ENCODE measurements at regions of chr6 and their contacts with region 1.

Region 1: GRCh38 chr6:16761471-16762267 is 409 bp upstream of the ATXN1 start:
- DNase-seq: peak; percentile 88 to 93 (median 91)
- ATAC-seq: peak; percentile 29 to 68 (median 62)
- H3K4me3 ChIP-seq: peak overlapping the region; percentile 67 to 99 (median 89)
- H3K27ac ChIP-seq: peak overlapping the region; percentile 93 to 100 (median 98)
- H3K4me1 ChIP-seq: peaks cover 0 to 65% (median 32%) of the 10 kb centered on the region in 12 donors
- H3K27me3 ChIP-seq: no peaks in the 10 kb centered on the region
- CTCF ChIP-seq: peak in 8 of 12 donors; percentile 21 to 52 (median 30)
- POLR2A ChIP-seq: no peak

Region 2: GRCh38 chr6:16228709-16229665 is 532.7 kb before region 1 on chr6:
- intact Hi-C with region 1: no loop called
- DNase-seq: no peak
- ATAC-seq: peak in 3 of 4 donors; percentile 44 to 72 (median 72)
- H3K4me3 ChIP-seq: peak overlapping the region in 8 of 12 donors; percentile 4 to 34 (median 11)
- H3K27ac ChIP-seq: no peak overlapping the region
- H3K4me1 ChIP-seq: peaks cover 0 to 16% (median 11%) of the 10 kb centered on the region in 12 donors
- H3K27me3 ChIP-seq: peaks cover 0 to 12% (median 0%) of the 10 kb centered on the region in 9 donors
- CTCF ChIP-seq: peak in 8 of 12 donors; percentile 17 to 49 (median 28)
- POLR2A ChIP-seq: no peak

Region 3: DNA sequence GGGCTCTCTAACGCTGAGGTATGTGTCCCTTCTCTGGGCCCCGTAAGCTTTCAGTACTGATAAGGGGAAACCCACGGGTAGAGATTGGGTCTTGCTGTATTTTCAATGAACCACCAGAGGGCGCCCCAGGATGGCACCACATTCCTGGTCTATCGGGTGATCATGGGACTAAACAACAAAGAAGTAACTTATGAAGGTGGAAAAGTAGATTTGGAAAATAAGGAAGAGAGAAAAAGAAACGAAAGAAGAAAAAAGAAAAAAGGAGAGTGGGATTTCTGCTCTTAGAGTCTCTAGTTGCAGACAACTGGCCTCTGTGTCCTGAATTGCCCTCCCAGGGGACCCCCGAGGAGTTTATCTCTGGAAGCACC is 429.5 kb before region 1 on chr6:
- intact Hi-C with region 1: loop called in 9 of 10 experiments (anchors 1 to 10 kb)
- DNase-seq: peak; percentile 68 to 82 (median 81)
- ATAC-seq: peak; percentile 72 to 87 (median 78)
- H3K4me3 ChIP-seq: peak overlapping the region in 1 of 12 donors; percentile 3
- H3K27ac ChIP-seq: peak overlapping the region in 3 of 12 donors; percentile 5 to 41 (median 41)
- H3K4me1 ChIP-seq: peaks cover 11 to 60% (median 34%) of the 10 kb centered on the region in 12 donors
- H3K27me3 ChIP-seq: no peaks in the 10 kb centered on the region
- CTCF ChIP-seq: peak; percentile 87 to 97 (median 92)
- POLR2A ChIP-seq: no peak

Region 4: DNA sequence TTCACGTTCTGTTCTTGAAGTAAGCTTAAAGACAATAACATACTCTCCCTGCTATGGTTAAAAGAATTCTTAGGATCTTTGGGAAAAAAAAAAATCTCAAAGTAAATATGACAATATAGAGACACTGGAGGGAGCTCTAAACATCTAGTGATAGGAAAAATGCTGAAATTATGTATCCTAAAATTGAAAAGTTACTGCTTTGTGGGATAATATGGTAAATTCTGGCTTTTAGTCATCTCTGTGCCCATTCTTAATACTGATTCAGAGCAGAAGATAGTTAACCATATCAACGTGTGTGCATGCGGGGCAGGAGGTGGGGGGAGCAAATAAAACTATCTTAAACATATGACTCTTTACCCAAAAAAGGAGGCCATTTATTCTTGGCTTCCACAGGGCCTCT is 357.8 kb before region 1 on chr6:
- intact Hi-C with region 1: loop called in 1 of 10 experiments (anchors 5 kb)
- DNase-seq: no peak
- ATAC-seq: no peak
- H3K4me3 ChIP-seq: no peak overlapping the region
- H3K27ac ChIP-seq: no peak overlapping the region
- H3K4me1 ChIP-seq: peaks cover 0 to 49% (median 5%) of the 10 kb centered on the region in 12 donors
- H3K27me3 ChIP-seq: no peaks in the 10 kb centered on the region
- CTCF ChIP-seq: peak in 3 of 12 donors; percentile 10 to 24 (median 21)
- POLR2A ChIP-seq: no peak

Region 5: DNA sequence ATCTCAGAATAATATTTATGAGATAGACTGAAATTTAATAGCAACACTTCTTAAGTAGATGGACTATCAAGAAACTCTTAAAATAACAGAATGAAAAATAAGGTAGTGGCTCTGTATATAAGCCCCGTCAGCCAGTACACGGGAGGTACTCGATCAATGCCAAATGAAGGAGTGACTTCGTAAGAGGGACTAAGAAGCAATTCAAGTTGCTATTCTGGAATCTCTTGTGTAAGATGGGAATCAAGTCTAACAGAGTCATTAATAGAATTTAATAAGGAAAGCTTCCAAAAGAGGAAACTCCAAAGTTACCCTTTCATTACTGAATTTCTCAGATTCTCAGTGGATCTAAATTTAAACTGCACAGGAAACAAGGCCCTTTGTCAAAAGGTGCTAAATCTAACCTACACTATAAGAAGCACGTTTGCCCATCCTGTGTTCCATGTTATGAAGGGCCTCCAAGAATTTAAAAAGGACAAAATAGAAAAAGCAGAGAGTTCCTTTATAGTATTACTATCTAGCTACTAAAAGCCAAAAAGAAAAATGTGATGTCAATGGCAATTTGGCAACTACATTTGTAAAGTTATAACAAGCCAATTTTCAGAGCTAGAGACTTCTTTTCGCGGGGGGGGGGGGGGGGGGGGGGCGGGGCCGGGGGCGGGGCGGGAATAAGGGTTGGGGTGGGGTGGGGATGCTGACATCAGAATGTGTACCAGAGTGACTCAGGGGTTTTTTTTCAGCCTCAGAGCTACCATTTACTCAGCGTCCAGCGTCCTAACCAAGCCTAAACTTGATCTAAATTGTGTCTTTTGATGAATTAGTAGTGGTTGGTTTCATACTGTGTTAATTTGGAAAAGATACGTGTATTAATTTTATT is 322.7 kb before region 1 on chr6:
- intact Hi-C with region 1: loop called in 1 of 10 experiments (anchors 5 kb)
- DNase-seq: no peak
- ATAC-seq: peak in 2 of 4 donors; percentile 49 to 56
- H3K4me3 ChIP-seq: no peak overlapping the region
- H3K27ac ChIP-seq: peak overlapping the region in 8 of 12 donors; percentile 13 to 54 (median 34)
- H3K4me1 ChIP-seq: peaks cover 0 to 55% (median 29%) of the 10 kb centered on the region in 12 donors
- H3K27me3 ChIP-seq: no peaks in the 10 kb centered on the region
- CTCF ChIP-seq: no peak
- POLR2A ChIP-seq: no peak

Region 6: DNA sequence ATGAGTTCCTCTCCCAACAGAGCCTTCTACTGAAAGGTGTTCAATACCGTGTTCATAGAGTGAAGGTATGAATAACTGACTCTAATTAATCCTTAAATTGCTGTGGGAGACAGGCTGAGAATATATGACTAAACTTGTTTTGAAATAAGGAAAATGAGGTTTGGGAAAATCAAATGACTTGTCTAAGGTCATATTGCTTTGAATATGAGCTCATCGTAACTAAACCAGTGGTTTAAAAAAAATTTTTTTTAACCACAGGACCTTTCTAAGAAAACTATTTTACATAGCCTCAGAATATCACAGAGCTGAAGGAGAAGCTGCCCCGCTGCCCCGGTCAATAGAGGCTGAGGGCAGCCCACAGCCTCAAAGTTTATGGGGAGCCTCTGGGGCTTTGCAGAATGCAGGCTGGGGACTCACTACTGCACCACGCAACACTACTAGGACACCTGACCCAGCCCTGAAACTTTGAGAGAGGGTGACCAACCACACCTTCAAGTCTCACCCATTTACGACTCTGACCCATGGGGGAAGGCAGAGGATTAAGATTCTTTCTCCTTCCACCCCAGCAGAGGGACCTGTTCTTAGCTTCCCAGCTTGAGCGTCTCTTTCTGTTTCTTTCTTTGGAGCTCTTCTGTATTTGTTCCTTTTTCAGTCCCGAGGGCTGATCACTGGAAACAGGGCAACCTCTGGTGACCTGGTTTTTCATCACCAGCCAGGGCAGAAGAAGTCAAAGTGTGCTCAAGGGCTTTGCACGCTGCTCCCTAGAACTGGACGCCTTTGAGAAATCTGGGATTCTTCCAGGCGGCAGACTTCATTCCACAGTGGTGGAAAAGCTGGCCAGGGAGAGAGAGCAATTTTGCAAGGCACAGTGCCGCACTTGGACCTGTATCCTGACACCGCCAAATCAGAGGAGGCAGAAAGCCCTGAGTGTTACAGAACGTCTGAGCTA is 220.6 kb before region 1 on chr6:
- intact Hi-C with region 1: loop called in 5 of 10 experiments (anchors 2 to 10 kb)
- DNase-seq: peak in 3 of 5 donors; percentile 25 to 73 (median 62)
- ATAC-seq: peak; percentile 47 to 81 (median 64)
- H3K4me3 ChIP-seq: peak overlapping the region in 3 of 12 donors; percentile 1 to 27 (median 23)
- H3K27ac ChIP-seq: peak overlapping the region in 11 of 12 donors; percentile 6 to 88 (median 57)
- H3K4me1 ChIP-seq: peaks cover 4 to 48% (median 34%) of the 10 kb centered on the region in 12 donors
- H3K27me3 ChIP-seq: no peaks in the 10 kb centered on the region
- CTCF ChIP-seq: peak in 7 of 12 donors; percentile 6 to 47 (median 22)
- POLR2A ChIP-seq: no peak

Region 7: DNA sequence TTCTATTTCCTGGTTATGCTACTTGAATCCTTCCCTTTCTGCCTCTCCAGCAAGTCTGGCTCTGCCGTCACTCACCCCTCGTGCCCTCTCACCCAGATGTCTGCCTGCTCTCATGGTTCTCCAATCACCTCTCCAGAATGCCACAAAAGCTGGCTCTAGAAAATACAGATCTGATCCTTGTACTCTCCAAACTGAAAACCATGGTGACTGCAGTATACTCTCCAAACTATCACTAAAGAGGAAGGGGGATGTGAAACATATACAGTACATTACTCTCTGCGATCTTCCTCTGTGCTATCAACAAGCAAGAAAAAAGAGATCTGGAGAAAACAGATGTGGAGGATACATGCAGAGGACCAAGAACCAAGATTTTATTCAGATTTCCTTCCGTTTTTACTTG is 91.5 kb before region 1 on chr6:
- intact Hi-C with region 1: loop called in 1 of 10 experiments (anchors 5 kb)
- DNase-seq: peak; percentile 36 to 82 (median 62)
- ATAC-seq: peak; percentile 78 to 91 (median 90)
- H3K4me3 ChIP-seq: no peak overlapping the region
- H3K27ac ChIP-seq: peak overlapping the region in 9 of 12 donors; percentile 3 to 69 (median 22)
- H3K4me1 ChIP-seq: peaks cover 0 to 57% (median 41%) of the 10 kb centered on the region in 12 donors
- H3K27me3 ChIP-seq: no peaks in the 10 kb centered on the region
- CTCF ChIP-seq: no peak
- POLR2A ChIP-seq: no peak

Region 8: GRCh38 chr6:17086469-17086868 is 324.8 kb after region 1 on chr6:
- intact Hi-C with region 1: loop called in 6 of 10 experiments (anchors 2 to 10 kb)
- DNase-seq: peak in 3 of 5 donors; percentile 45 to 46 (median 46)
- ATAC-seq: peak; percentile 75 to 85 (median 78)
- H3K4me3 ChIP-seq: no peak overlapping the region
- H3K27ac ChIP-seq: no peak overlapping the region
- H3K4me1 ChIP-seq: peaks cover 0 to 7% (median 0%) of the 10 kb centered on the region in 12 donors
- H3K27me3 ChIP-seq: no peaks in the 10 kb centered on the region
- CTCF ChIP-seq: peak; percentile 44 to 72 (median 66)
- POLR2A ChIP-seq: no peak